ENCODE measurements at regions of chr19 and their contacts with region 1.

Region 1: DNA sequence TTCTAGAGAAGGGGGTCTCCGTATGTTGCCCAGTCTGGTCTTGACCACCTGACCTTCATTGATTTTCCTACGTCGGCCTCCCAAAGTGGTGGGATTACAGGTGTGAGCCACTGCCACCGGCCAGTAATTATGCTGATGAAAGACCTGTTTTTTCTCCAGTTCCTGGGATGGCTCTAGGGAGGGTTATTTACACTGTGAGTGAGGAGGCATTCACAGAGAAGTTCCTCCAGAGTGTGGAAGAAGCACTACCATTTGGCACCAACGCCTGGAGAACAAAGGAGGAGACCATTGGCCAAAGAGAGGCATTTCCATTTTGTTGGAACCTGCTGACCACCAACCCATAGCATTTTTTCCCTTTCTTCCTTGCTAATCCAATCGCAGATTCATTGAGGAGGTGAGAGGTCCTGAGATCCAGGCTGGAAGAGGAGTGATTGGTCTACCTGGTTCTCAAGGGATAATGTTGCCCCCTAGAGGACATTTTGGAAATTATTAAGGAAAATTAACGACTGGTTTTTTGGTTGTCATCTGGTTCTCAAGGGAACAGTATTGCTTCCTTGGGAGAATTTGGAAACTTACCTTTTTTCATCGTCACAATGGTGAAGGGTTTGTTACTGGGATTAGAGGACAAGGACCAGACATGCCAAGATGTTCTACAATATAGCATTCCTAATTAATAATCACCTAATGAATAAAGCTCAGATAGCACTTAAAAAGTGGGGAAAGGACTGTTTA is 5.5 kb upstream of the SAE1 start:
- DNase-seq: peak in 2 of 5 donors; percentile 39 to 52
- H3K4me3 ChIP-seq: no peak overlapping the region
- H3K4me3 Mint-ChIP-seq: peak overlapping the region in 1 of 7 donors; percentile 72
- H3K27ac ChIP-seq: no peak overlapping the region
- H3K27ac Mint-ChIP-seq: peak overlapping the region in 2 of 8 donors; percentile 26 to 57
- H3K4me1 ChIP-seq: no peaks in the 10 kb centered on the region
- H3K4me1 Mint-ChIP-seq: peaks cover 0 to 6% (median 6%) of the 10 kb centered on the region in 3 donors
- H3K27me3 ChIP-seq: no peaks in the 10 kb centered on the region
- H3K27me3 Mint-ChIP-seq: no peaks in the 10 kb centered on the region

Region 2: GRCh38 chr19:47035127-47036096 is 89.7 kb before region 1 on chr19:
- CTCF ChIA-PET with region 1: interaction called, 11 read pairs
- POLR2A ChIA-PET with region 1: no interaction called
- DNase-seq: peak; percentile 89 to 98 (median 94)
- H3K4me3 ChIP-seq: peak overlapping the region; percentile 69
- H3K4me3 Mint-ChIP-seq: peak overlapping the region; percentile 84 to 96 (median 91)
- H3K27ac ChIP-seq: peak overlapping the region; percentile 48
- H3K27ac Mint-ChIP-seq: peak overlapping the region; percentile 74 to 90 (median 82)
- H3K4me1 ChIP-seq: peaks cover 14% of the 10 kb centered on the region
- H3K4me1 Mint-ChIP-seq: peaks cover 16 to 24% (median 20%) of the 10 kb centered on the region in 3 donors
- H3K27me3 ChIP-seq: no peaks in the 10 kb centered on the region
- H3K27me3 Mint-ChIP-seq: peaks cover 12 to 18% of the 10 kb centered on the region in 2 donors